ENCODE measurements at regions of chr20 and their contacts with region 1.

Region 1: GRCh38 chr20:63973636-63974402 is 4.1 kb upstream of the ZNF512B start:
- DNase-seq: peak; percentile 96
- H3K4me3 ChIP-seq: peak overlapping the region; percentile 43 to 57 (median 46)
- H3K27ac ChIP-seq: peak overlapping the region; percentile 34 to 74 (median 58)
- H3K4me1 ChIP-seq: peaks cover 28 to 57% (median 37%) of the 10 kb centered on the region in 4 donors
- H3K27me3 ChIP-seq: no peaks in the 10 kb centered on the region
- CTCF ChIP-seq: peak; percentile 98 to 99 (median 98)
- EP300 ChIP-seq: no peak
- POLR2A ChIP-seq: no peak

Region 2: GRCh38 chr20:63537525-63538203 is 436.2 kb before region 1 on chr20:
- intact Hi-C with region 1: loop called (anchors 2 kb)
- DNase-seq: peak; percentile 96
- H3K4me3 ChIP-seq: peak overlapping the region; percentile 23 to 51 (median 36)
- H3K27ac ChIP-seq: peak overlapping the region in 3 of 4 donors; percentile 33 to 52 (median 44)
- H3K4me1 ChIP-seq: peaks cover 16 to 34% (median 27%) of the 10 kb centered on the region in 4 donors
- H3K27me3 ChIP-seq: peaks cover 0 to 71% (median 23%) of the 10 kb centered on the region in 4 donors
- CTCF ChIP-seq: peak; percentile 91 to 97 (median 93)
- EP300 ChIP-seq: no peak
- POLR2A ChIP-seq: no peak

Region 3: GRCh38 chr20:63707549-63708300 is 266.1 kb before region 1 on chr20 and contains the starts of genes ARFRP1 and ZGPAT:
- intact Hi-C with region 1: no loop called
- DNase-seq: peak; percentile 96
- H3K4me3 ChIP-seq: peak within 1 kb of the TSS; percentile 73 to 99 (median 90)
- H3K27ac ChIP-seq: peak within 1 kb of the TSS; percentile 81 to 96 (median 88)
- H3K4me1 ChIP-seq: peaks cover 28 to 45% (median 38%) of the 10 kb centered on the region in 4 donors
- H3K27me3 ChIP-seq: no peaks in the 10 kb centered on the region
- CTCF ChIP-seq: peak in 1 of 3 experiments; percentile 16
- EP300 ChIP-seq: no peak
- POLR2A ChIP-seq: peak; percentile 24
- total RNA-seq, gene ARFRP1: 34.1 to 46.5 (median 44.6) TPM
- total RNA-seq, gene ZGPAT: 22.5 to 38.9 (median 28.6) TPM

Region 4: GRCh38 chr20:63785691-63786131 is 188.1 kb before region 1 on chr20:
- intact Hi-C with region 1: loop called (anchors 5 kb)
- DNase-seq: no peak
- H3K4me3 ChIP-seq: no peak overlapping the region
- H3K27ac ChIP-seq: no peak overlapping the region
- H3K4me1 ChIP-seq: peaks cover 0 to 36% (median 10%) of the 10 kb centered on the region in 4 donors
- H3K27me3 ChIP-seq: no peaks in the 10 kb centered on the region
- CTCF ChIP-seq: no peak
- EP300 ChIP-seq: no peak
- POLR2A ChIP-seq: no peak

Region 5: DNA sequence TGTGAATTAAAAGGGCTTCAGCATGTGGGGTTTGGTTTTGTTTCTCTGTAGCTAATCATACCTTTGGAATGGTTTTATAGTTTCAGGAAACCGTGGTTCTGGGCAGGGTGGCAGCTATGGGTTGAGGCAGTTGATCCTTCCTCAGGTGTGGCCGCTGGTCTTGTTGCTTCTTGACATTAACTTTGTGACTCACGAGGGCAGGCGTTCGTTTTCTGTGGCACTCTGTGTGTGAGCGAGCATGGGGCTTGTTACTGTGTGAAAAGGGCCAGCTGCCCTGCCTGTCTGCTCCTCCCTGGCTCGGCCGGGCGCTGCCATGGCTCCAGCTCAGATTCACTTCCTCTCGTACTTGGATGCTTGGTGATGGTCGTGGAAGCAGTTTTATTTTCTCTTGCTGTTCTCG is 62.6 kb before region 1 on chr20:
- intact Hi-C with region 1: loop called (anchors 5 kb)
- DNase-seq: no peak
- H3K4me3 ChIP-seq: no peak overlapping the region
- H3K27ac ChIP-seq: no peak overlapping the region
- H3K4me1 ChIP-seq: peaks cover 26 to 46% (median 35%) of the 10 kb centered on the region in 4 donors
- H3K27me3 ChIP-seq: no peaks in the 10 kb centered on the region
- CTCF ChIP-seq: no peak
- EP300 ChIP-seq: no peak
- POLR2A ChIP-seq: no peak